ENCODE measurements at regions of chr16 and their contacts with region 1.

Region 1: DNA sequence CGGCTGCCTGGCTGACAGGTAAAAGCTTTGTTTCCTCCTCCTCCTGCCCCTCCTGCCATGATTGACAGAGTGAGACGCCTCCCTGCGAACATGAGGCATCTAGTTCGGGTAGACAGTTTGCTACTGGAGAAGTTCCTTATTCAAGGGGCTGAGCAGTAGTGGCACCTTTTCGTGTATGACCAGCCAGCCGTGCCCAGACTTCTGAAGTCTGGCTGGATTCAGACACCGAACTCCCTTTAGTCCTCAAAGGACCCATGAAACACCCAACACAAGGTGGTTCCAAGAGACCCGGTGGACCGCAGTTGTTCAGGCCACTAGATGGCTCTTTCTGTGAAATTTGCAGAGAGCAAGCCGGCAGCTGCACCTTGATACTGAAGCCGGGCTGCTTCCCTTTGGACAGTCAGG is 192.8 kb downstream of the XYLT1 start:
- DNase-seq: peak; percentile 24 to 73 (median 67)
- ATAC-seq: peak; percentile 47 to 78
- H3K4me3 ChIP-seq: no peak overlapping the region
- H3K27ac ChIP-seq: no peak overlapping the region
- H3K4me1 ChIP-seq: no peaks in the 10 kb centered on the region
- H3K27me3 ChIP-seq: no peaks in the 10 kb centered on the region

Region 2: GRCh38 chr16:17343028-17343427 is 65.0 kb after region 1 on chr16:
- intact Hi-C with region 1: loop called in 1 of 4 experiments (anchors 10 kb)
- DNase-seq: no peak
- ATAC-seq: peak in 1 of 2 donors; percentile 30
- H3K4me3 ChIP-seq: no peak overlapping the region
- H3K27ac ChIP-seq: peak overlapping the region; percentile 84
- H3K4me1 ChIP-seq: peaks cover 20% of the 10 kb centered on the region
- H3K27me3 ChIP-seq: no peaks in the 10 kb centered on the region